ENCODE measurements at regions of chr5 and their contacts with region 1.

Region 1: DNA sequence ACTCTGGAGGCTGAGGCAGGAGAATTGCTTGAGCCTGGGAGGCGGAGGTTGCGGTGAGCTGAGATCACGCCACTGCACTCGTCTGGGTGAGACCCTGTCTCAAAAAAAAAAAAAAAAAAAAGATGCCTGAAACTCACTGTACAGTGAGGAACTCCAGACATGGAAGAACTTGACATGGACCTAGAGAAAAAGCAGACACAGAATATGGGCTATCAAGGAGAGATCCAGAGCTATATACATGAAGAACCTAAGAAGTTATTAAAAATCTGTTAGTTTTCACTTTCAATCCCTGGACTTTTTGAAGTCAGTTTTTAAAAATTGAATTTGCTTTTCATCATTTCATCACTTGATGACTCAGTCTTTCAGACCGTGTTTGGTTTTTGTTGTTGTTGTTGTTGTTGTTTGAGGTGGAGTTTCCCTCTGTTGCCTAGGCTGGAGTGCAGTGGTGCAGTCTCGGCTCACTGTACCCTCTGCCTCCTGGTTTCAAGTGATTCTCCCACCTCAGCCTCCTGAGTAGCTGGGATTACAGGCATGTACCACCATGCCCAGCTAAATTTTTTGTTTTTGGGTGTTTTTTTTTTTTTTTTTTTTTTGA is 20.3 kb downstream of the PAIP2 start:
- DNase-seq: no peak
- H3K4me3 ChIP-seq: no peak overlapping the region
- H3K27ac ChIP-seq: no peak overlapping the region
- H3K4me1 ChIP-seq: no peaks in the 10 kb centered on the region
- H3K27me3 ChIP-seq: no peaks in the 10 kb centered on the region
- CTCF ChIP-seq: no peak

Region 2: DNA sequence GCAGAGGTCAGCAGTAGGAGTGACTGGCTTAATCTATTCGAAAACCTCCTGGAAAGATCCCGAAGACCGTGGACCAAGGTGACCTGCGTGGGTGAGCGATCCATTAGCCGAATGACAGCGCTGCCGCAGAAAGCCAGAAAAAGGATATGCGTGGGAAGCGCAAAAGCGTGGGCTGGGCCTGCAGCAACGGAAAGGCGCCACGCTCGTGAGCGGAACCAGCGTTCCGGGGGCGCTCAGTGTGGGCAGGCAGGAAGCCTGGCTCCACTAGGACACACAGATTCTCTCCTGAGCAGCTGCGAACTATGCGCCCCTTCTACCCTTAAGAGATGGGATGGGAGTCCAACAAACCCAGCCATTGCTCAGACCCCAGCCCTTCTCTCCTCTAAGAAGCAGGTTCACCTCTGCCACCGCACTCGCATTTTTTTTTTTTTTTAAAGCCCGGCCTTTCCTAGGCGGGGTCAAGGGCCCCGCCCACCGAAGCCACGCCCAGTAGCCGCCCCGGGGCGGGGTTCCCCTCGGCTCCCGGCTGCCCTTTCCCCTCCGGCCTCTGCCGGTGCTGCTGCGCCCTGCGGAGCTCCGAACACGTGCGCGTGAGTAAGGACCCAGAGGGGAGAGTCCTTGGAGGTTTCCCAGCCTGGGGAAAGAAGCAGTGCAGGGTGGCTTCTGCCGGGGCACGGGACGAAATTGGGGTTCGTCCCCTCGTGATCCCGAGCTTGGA is 88.2 kb before region 1 on chr5:
- CTCF ChIA-PET with region 1: no interaction called
- POLR2A ChIA-PET with region 1: no interaction called
- intact Hi-C with region 1: no loop called
- DNase-seq: peak; percentile 90
- H3K4me3 ChIP-seq: peak overlapping the region; percentile 73
- H3K27ac ChIP-seq: peak overlapping the region; percentile 75
- H3K4me1 ChIP-seq: peaks cover 47% of the 10 kb centered on the region
- H3K27me3 ChIP-seq: no peaks in the 10 kb centered on the region
- CTCF ChIP-seq: no peak

Region 3: DNA sequence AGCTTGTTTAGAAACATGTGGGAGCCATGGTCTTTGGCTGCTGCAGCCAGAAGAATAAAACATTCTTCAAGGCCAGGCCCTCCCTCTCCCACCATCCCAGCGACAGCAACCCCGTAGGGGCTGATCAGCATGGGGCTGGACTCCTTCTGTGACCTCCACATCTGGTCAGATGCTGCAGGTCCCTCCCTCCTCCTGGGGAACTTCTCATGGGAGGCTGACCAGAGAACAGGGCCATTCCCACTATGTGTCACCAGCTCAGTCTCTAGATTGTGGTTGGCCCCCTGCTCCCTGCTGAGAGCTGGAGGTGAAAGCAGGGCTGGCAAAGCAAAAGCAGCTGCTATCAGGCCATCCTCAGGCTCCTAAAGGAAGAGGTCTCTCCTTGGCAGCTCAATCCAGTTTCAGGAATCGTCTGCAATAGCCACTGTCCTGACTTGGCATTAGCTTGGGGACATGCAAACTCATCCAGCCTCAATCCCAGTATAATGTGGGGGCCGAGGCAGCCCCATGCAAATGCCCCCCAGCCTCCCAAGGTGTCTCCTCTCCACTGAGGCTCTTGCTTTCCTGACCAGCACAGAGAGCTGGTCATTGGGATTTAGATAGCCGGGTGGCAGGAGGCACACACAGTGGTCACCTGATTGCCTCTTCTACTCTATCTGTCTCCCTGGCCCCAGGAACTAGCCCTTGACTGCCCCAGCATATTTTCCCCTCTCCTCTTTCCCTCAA is 599.7 kb after region 1 on chr5:
- CTCF ChIA-PET with region 1: no interaction called
- POLR2A ChIA-PET with region 1: interaction called, 13 read pairs
- intact Hi-C with region 1: no loop called
- DNase-seq: no peak
- H3K4me3 ChIP-seq: no peak overlapping the region
- H3K27ac ChIP-seq: no peak overlapping the region
- H3K4me1 ChIP-seq: no peaks in the 10 kb centered on the region
- H3K27me3 ChIP-seq: no peaks in the 10 kb centered on the region
- CTCF ChIP-seq: no peak

Region 4: GRCh38 chr5:140145818-140146522 is 784.0 kb after region 1 on chr5:
- CTCF ChIA-PET with region 1: no interaction called
- POLR2A ChIA-PET with region 1: no interaction called
- intact Hi-C with region 1: no loop called
- DNase-seq: no peak
- H3K4me3 ChIP-seq: no peak overlapping the region
- H3K27ac ChIP-seq: no peak overlapping the region
- H3K4me1 ChIP-seq: no peaks in the 10 kb centered on the region
- H3K27me3 ChIP-seq: no peaks in the 10 kb centered on the region
- CTCF ChIP-seq: no peak

Measured in A673 (cell line).